Mammary epithelial cell (primary cell): ENCODE measurements at regions of chr12 and their contacts with region 1.

Region 1: DNA sequence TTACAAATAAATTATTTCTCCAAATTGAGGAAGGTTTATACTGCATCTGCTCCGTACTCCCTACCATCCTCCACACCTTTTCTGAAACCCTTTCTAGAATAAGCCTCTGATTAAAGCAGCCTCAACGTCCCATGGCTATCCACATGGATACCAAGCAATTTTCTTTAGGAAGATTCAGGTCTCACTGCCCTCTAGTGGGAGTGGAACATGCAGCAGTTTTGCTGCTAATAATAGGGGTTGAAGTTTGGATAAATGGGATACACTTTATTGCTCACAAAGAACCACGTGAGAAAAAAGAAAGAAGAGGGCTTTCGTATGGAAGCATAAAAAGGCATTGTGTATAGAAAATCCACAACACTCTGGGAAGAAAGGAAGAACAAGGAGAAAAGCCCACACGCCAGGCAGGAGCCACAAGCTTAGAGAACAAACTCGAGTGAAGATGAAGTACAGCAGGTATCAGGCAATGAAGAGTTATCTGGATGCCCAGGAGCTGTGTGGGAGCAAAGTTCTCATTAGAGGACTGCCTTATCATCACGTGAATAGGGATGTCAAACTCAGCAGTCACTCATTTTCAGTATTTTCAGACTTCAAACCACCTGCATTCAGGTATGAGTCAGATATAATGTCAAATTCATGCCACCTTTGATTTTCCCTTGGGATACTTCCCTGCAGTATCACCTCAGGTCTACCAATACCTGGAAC is 45.8 kb downstream of the CCER1 start:
- DNase-seq: peak; percentile 46
- H3K4me3 ChIP-seq: no peak overlapping the region
- H3K27ac ChIP-seq: no peak overlapping the region
- H3K4me1 ChIP-seq: peaks cover 24% of the 10 kb centered on the region
- H3K27me3 ChIP-seq: no peaks in the 10 kb centered on the region
- CTCF ChIP-seq: peak; percentile 84 to 95

Region 2: DNA sequence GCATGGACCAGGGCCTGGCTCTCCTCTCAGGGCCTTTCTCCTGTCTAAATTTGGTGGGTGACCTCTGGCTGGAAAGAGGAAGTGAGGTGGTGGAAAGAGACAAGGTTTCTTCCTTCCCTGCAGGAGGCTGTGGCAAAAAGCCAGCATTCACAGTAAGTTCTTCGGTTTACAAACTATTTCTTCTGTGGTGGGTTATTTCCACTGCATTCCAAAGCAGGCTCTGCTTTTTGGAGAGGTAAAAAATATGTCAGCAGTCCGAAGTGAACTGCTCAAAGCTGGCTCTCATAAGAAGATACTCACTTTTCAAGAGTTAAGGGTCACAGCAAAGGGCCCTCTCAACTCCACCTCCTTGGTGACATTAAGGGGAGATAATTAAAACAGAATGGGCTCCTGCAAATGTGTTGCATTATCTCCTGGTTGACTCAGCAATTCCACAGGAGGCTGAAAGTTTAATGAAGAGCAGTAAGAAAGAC is 1334.4 kb before region 1 on chr12:
- CTCF ChIA-PET with region 1: no interaction called
- dilution Hi-C with region 1: no loop called
- in situ Hi-C with region 1: loop called in 1 of 2 experiments (anchors 25 kb)
- intact Hi-C with region 1: no loop called
- DNase-seq: peak; percentile 18
- H3K4me3 ChIP-seq: no peak overlapping the region
- H3K27ac ChIP-seq: no peak overlapping the region
- H3K4me1 ChIP-seq: peaks cover 13% of the 10 kb centered on the region
- H3K27me3 ChIP-seq: no peaks in the 10 kb centered on the region
- CTCF ChIP-seq: no peak

Region 3: DNA sequence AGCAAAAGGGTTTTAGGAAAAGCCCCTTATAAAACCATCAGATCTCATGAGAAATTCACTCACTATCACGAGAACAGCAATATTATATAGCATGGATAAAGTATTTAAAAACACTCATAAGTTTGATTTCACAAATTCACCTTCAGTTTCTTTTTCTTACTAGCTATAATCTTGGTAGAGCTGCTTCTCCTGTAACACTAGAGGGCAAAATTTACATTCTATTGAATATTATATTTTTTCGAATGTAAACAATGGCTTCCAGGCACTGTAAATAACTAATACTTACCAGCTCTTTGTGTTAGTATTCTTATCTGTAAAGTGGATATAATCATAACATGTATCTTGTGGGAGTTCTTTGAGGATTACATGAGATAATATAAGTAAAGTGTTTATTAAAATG is 213.8 kb before region 1 on chr12:
- CTCF ChIA-PET with region 1: no interaction called
- dilution Hi-C with region 1: no loop called
- in situ Hi-C with region 1: loop called in 1 of 2 experiments (anchors 25 kb)
- intact Hi-C with region 1: loop called (anchors 2 kb)
- DNase-seq: no peak
- H3K4me3 ChIP-seq: no peak overlapping the region
- H3K27ac ChIP-seq: no peak overlapping the region
- H3K4me1 ChIP-seq: no peaks in the 10 kb centered on the region
- H3K27me3 ChIP-seq: no peaks in the 10 kb centered on the region
- CTCF ChIP-seq: peak; percentile 27 to 50

Region 4: GRCh38 chr12:90854136-90854689 is 55.0 kb before region 1 on chr12:
- CTCF ChIA-PET with region 1: no interaction called
- dilution Hi-C with region 1: no loop called
- in situ Hi-C with region 1: no loop called
- intact Hi-C with region 1: loop called (anchors 5 kb)
- DNase-seq: peak; percentile 25
- H3K4me3 ChIP-seq: no peak overlapping the region
- H3K27ac ChIP-seq: no peak overlapping the region
- H3K4me1 ChIP-seq: no peaks in the 10 kb centered on the region
- H3K27me3 ChIP-seq: no peaks in the 10 kb centered on the region
- CTCF ChIP-seq: peak; percentile 78 to 81

Region 5: GRCh38 chr12:91040096-91040755 is 131.0 kb after region 1 on chr12:
- CTCF ChIA-PET with region 1: no interaction called
- dilution Hi-C with region 1: no loop called
- in situ Hi-C with region 1: no loop called
- intact Hi-C with region 1: no loop called
- DNase-seq: no peak
- H3K4me3 ChIP-seq: no peak overlapping the region
- H3K27ac ChIP-seq: no peak overlapping the region
- H3K4me1 ChIP-seq: no peaks in the 10 kb centered on the region
- H3K27me3 ChIP-seq: peaks cover 4% of the 10 kb centered on the region
- CTCF ChIP-seq: no peak